Heart right ventricle (tissue), 16 donors: ENCODE measurements at regions of chr2 and their contacts with region 1.

Region 1: DNA sequence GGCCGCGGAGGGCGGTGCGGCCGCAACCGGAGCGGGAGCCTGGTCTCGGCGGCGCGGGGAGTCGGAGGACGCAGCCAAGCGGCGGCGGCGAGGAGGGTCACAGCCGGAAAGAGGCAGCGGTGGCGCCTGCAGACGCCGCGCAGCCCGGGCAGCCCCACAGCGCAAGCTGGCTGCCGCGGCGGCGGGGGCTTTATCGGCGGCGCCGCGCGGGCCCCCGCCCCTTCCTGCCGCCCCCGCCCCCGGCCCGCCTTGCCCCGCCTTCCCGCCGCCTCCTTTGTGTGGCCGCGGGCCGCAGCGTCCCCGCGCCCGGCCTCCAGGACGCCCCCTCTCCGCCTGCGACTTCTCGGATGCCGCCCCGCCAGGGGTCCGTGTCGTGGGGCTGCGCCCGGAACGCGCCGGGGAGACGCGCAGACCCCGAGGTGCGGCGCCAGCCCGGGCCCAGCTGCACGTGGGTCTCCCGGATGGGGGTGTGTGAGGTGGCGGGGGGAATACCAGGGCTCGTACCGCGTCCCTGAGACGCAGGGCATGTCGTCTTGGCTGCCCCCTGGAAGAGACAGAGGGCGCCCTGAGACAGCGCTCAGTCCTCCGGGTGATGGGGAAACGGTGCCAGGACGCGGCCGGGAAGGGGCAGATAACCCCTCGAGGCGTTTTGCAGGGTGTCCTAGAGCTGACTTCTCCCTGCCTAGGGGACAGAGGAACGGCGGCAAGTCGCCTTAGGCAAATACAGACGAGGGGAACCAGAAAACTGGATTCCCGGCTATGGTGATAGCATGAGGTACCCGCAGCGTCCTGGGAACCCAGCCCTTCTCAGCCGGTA is at the start of gene SERPINE2:
- DNase-seq: peak; percentile 43 to 57
- ATAC-seq: peak; percentile 57 to 85 (median 78)
- H3K4me3 ChIP-seq: peak within 1 kb of the TSS; percentile 30 to 73 (median 64)
- H3K27ac ChIP-seq: peak within 1 kb of the TSS in 9 of 10 donors; percentile 18 to 78 (median 65)
- H3K4me1 ChIP-seq: peaks cover 0 to 50% (median 14%) of the 10 kb centered on the region in 9 donors
- H3K27me3 ChIP-seq: peaks cover 0 to 73% (median 54%) of the 10 kb centered on the region in 7 donors
- CTCF ChIP-seq: peak in 7 of 9 donors; percentile 26 to 58 (median 42)
- total RNA-seq, gene SERPINE2: 5.3 to 56.6 (median 19.7) TPM

Region 2: DNA sequence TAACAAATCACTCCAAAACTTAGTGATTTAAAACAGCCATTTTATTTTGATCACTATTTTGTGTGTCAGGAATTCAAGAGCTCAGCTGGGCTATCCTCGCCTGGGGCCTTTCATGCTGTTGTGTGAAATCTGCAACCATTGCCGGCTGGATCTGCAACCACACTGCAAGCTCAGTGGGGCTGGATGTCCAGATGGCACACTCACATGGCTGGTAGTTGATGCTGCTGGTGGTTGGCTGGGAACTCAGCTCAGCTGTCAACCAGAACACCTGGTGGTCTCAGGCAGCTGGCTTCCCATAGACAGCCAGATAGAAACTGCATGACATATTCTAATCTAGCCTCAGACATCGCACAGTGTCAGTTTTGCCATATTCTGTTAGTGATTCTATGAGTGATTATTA is 171.3 kb before region 1 on chr2:
- intact Hi-C with region 1: no loop called
- DNase-seq: no peak
- ATAC-seq: no peak
- H3K4me3 ChIP-seq: no peak overlapping the region
- H3K27ac ChIP-seq: no peak overlapping the region
- H3K4me1 ChIP-seq: peaks cover 0 to 10% (median 0%) of the 10 kb centered on the region in 9 donors
- H3K27me3 ChIP-seq: no peaks in the 10 kb centered on the region
- CTCF ChIP-seq: no peak

Region 3: GRCh38 chr2:223970343-223971128 is 68.8 kb before region 1 on chr2:
- intact Hi-C with region 1: no loop called
- DNase-seq: peak in 1 of 2 donors; percentile 32
- ATAC-seq: peak in 3 of 8 donors; percentile 33 to 52 (median 43)
- H3K4me3 ChIP-seq: no peak overlapping the region
- H3K27ac ChIP-seq: no peak overlapping the region
- H3K4me1 ChIP-seq: peaks cover 0 to 5% (median 0%) of the 10 kb centered on the region in 9 donors
- H3K27me3 ChIP-seq: no peaks in the 10 kb centered on the region
- CTCF ChIP-seq: peak; percentile 87 to 96 (median 93)

Region 4: DNA sequence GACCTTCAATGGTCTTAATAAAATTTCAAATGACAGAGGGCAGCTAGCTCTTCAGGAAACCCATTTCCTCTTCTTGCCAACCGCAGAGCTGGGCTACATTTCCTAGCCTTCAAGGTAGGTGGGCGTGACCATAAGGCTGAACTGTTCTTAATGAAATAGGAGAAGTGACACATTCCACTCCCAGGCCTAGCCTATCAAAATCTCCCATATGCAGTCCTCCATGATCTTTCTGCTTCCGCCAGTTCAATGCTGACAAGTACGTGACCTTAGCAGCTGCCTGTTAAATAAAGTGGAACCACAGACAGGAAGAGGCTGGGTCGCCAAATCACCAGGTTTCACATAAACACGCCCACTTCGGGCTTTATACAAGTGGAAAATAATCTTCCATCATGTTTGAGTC is 13.5 kb before region 1 on chr2:
- intact Hi-C with region 1: no loop called
- DNase-seq: no peak
- ATAC-seq: peak in 3 of 8 donors; percentile 31 to 46 (median 37)
- H3K4me3 ChIP-seq: no peak overlapping the region
- H3K27ac ChIP-seq: peak overlapping the region in 1 of 10 donors; percentile 24
- H3K4me1 ChIP-seq: peaks cover 0 to 18% (median 0%) of the 10 kb centered on the region in 9 donors
- H3K27me3 ChIP-seq: peaks cover 0 to 14% (median 0%) of the 10 kb centered on the region in 7 donors
- CTCF ChIP-seq: no peak

Region 5: GRCh38 chr2:224104668-224105386 is 65.5 kb after region 1 on chr2:
- intact Hi-C with region 1: loop called in 1 of 10 experiments (anchors 5 kb)
- DNase-seq: no peak
- ATAC-seq: no peak
- H3K4me3 ChIP-seq: no peak overlapping the region
- H3K27ac ChIP-seq: no peak overlapping the region
- H3K4me1 ChIP-seq: peaks cover 0 to 26% (median 10%) of the 10 kb centered on the region in 9 donors
- H3K27me3 ChIP-seq: no peaks in the 10 kb centered on the region
- CTCF ChIP-seq: no peak

Region 6: GRCh38 chr2:224145751-224146355 is 106.5 kb after region 1 on chr2:
- intact Hi-C with region 1: loop called in 1 of 10 experiments (anchors 10 kb)
- DNase-seq: peak in 1 of 2 donors; percentile 44
- ATAC-seq: peak in 6 of 8 donors; percentile 75 to 90 (median 83)
- H3K4me3 ChIP-seq: no peak overlapping the region
- H3K27ac ChIP-seq: peak overlapping the region in 6 of 10 donors; percentile 32 to 64 (median 48)
- H3K4me1 ChIP-seq: peaks cover 0 to 19% (median 4%) of the 10 kb centered on the region in 9 donors
- H3K27me3 ChIP-seq: peaks cover 0 to 2% (median 0%) of the 10 kb centered on the region in 7 donors
- CTCF ChIP-seq: no peak

Region 7: GRCh38 chr2:224284134-224284946 is 245.0 kb after region 1 on chr2:
- intact Hi-C with region 1: loop called in 2 of 10 experiments (anchors 2 to 5 kb)
- DNase-seq: peak in 1 of 2 donors; percentile 19
- ATAC-seq: peak in 7 of 8 donors; percentile 37 to 53 (median 42)
- H3K4me3 ChIP-seq: no peak overlapping the region
- H3K27ac ChIP-seq: no peak overlapping the region
- H3K4me1 ChIP-seq: peaks cover 0 to 12% (median 0%) of the 10 kb centered on the region in 9 donors
- H3K27me3 ChIP-seq: peaks cover 0 to 41% (median 7%) of the 10 kb centered on the region in 7 donors
- CTCF ChIP-seq: peak; percentile 38 to 82 (median 64)